ENCODE measurements at regions of chr18 and their contacts with region 1.

Region 1: DNA sequence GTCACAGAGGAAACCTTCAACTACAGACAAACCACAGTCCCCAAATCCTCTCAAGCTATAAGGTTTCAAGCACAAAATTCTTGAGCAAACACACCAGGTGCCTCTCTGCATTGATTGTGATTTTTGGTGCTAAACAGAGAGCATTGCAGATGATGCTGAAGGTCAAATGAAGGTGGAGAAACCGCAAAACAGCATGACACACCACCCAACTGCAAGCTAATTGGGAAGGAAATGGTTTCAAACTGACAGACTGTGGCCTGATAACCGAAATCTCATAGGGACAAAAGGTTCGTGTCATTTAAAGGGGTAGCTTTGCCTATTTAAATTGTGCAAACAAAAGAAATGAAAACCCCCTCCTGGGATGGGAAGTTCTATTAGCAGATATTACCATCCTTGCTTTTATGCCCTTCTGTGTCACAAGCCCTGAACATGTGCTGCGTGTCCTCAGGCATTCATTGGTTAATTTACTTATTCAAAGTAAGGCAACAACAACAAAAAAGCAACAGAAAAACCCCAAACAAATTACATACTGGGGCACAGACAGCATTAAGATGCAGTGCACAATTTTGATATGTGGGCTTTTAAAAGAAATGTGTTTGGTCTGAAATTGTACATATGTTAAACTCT is 154.9 kb downstream of the AQP4 start:
- DNase-seq: peak; percentile 31
- CTCF ChIP-seq: no peak

Region 2: DNA sequence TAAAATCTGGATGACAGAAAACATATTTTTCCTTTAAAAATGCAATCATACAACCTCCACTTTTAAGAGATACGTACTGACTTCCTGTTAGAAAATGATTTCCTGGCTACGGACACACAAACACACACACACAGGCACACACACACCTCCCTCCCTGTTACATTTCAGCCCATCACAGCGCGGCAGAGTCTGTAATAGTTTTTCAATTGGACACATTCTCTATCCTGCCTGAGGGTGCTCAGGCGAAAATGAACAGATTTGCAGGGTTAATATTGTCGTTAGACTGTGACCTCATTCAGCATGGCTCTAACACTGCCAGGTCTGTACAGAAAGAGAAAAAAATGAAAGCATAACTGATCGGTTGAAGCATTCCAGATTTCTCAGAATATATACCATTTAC is 207.2 kb before region 1 on chr18:
- CTCF ChIA-PET with region 1: no interaction called
- POLR2A ChIA-PET with region 1: no interaction called
- DNase-seq: no peak
- CTCF ChIP-seq: no peak

Region 3: DNA sequence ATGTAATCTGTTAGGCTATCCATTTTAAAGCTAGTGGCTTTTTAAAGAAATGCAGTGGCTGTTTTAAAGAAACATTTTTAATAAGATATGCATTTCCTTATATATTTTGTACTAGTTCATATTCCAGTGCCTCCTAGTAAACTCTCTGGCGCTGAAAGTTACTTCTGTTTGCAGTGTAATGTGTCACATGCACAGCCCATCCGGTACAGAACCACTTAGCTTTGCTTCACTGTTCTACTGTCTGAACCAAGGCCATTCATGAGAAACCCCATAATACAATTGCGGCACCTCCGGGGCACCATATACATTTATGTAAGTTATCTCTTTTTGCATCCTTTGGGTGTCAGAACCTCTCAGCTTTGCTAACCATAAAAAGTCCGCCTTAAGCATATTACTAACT is 47.6 kb before region 1 on chr18:
- CTCF ChIA-PET with region 1: no interaction called
- POLR2A ChIA-PET with region 1: no interaction called
- DNase-seq: no peak
- CTCF ChIP-seq: no peak

Region 4: GRCh38 chr18:26700201-26700600 is 10.4 kb before region 1 on chr18:
- CTCF ChIA-PET with region 1: interaction called, 12 read pairs
- POLR2A ChIA-PET with region 1: no interaction called
- DNase-seq: no peak
- CTCF ChIP-seq: no peak

Region 5: DNA sequence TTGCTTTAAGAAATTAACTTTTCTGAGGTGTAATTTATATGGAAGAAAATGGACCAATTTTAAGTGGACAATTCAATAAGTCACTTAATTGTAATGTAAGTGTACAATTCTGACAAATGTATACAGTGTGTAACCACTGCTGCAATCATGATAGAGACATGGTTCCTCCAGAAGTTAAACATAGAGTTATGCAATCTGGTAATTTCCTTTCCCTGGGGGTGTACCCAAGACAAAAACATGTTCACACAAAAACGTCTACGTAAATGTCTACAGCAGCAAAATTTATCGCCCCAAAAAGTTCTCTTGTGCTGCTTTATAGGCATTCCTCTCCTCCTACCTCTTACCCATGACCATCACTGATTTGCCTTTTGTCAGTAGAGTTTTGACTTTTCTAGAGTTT is 13.4 kb after region 1 on chr18:
- CTCF ChIA-PET with region 1: interaction called, 11 read pairs
- POLR2A ChIA-PET with region 1: no interaction called
- DNase-seq: no peak
- CTCF ChIP-seq: no peak

Measured in GM10248 (cell line).